ENCODE measurements at regions of chr1 and their contacts with region 1.

Region 1: DNA sequence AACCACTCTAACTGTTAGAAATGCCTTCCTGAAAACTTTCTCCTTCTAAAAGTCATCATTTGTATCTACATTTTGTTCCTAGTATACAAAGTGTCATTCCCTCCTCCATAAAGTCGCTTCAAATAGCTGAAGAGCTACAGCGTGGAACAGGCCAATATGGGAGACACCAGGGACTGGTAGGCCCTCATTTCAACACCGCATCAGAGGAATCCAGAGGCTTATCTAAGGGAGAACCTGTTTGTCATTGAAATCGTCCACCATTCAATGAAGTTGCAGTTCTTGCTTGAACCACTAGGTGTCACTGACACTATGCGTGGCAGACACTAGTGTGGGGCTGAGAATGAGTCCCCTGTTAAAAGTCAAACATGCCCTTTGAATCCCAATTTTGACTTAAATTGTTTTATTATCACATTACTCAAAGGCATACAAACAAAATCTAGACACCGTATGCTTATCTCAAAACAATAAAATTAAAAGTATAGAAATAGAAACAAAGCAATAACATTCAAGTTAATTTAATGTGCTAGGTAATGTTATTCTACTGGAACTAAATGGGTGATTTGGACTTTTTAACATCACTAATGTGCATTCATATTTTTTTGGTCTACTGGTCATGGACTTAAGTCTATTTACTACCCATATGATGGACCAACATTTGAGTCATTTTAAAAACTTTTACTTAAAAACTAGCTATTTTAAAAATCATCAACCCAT is 182.3 kb downstream of the FCRL5 start:
- DNase-seq: peak; percentile 71
- H3K4me3 ChIP-seq: no peak overlapping the region
- H3K27ac ChIP-seq: no peak overlapping the region
- H3K4me1 ChIP-seq: no peaks in the 10 kb centered on the region
- H3K27me3 ChIP-seq: peaks cover 2 to 3% of the 10 kb centered on the region in 2 experiments
- CTCF ChIP-seq: peak; percentile 70 to 77
- POLR2A ChIP-seq: no peak

Region 2: DNA sequence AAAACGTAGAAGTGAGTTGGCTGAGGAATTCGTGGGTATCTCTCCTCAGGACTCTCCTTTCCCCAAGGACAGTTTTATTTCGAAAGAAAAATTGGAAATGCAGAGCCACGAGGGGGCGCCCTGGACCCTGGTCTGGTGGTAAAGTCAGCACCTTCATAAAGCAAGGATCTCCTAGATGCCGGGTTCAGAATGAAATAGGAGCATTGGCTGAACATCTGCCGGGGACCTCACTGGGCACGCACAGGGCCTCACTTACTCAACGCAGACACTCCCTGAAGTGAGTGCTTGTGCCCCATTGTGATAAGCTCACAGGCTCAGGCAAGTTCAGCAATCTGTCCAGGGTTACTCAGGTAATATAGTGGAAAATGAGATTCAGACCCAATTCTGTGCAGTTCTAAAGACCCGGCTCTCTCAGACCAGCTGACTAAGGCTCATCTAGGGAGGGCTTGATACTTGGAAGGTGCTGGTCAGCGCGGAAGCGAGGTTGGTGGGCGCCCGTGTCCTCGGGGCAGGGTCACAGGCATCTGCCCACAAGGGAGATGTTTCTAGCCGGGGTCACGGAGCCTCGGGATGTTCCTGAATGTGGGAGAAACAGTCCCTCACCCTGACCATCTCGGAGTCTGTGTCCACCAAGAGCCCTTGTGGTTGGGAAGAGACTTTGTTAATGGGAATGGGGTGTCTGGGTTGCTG is 176.1 kb before region 1 on chr1:
- CTCF ChIA-PET with region 1: no interaction called
- POLR2A ChIA-PET with region 1: no interaction called
- dilution Hi-C with region 1: no loop called
- intact Hi-C with region 1: loop called (anchors 2 kb)
- DNase-seq: peak; percentile 61
- H3K4me3 ChIP-seq: no peak overlapping the region
- H3K27ac ChIP-seq: no peak overlapping the region
- H3K4me1 ChIP-seq: no peaks in the 10 kb centered on the region
- H3K27me3 ChIP-seq: peaks cover 17% of the 10 kb centered on the region in 2 experiments
- CTCF ChIP-seq: peak; percentile 73 to 75
- POLR2A ChIP-seq: no peak

Region 3: DNA sequence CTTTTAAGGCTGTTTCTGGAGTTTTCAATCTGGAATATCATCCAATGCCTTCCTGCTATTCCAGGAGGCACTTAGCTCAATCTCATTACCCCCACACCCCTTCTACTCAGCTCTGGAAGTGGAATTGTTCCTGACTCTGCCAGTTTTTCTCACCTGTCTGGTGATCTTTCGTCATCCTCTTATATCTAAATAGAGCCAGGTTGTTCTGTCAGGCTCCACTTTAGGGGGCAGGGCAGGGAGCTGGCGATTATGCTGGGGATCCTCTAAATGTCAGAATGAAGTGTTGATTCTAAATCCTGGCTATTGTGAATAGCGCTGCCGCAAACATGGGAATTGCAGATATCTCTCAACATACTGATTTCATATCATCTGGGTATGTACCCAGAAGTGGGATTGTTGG is 168.2 kb before region 1 on chr1:
- CTCF ChIA-PET with region 1: no interaction called
- POLR2A ChIA-PET with region 1: no interaction called
- dilution Hi-C with region 1: loop called (anchors 25 kb)
- intact Hi-C with region 1: no loop called
- DNase-seq: no peak
- H3K4me3 ChIP-seq: no peak overlapping the region
- H3K27ac ChIP-seq: no peak overlapping the region
- H3K4me1 ChIP-seq: no peaks in the 10 kb centered on the region
- H3K27me3 ChIP-seq: peaks cover 0 to 2% of the 10 kb centered on the region in 2 experiments
- CTCF ChIP-seq: no peak
- POLR2A ChIP-seq: no peak

Region 4: GRCh38 chr1:157301477-157302198 is 68.3 kb before region 1 on chr1:
- CTCF ChIA-PET with region 1: no interaction called
- POLR2A ChIA-PET with region 1: no interaction called
- dilution Hi-C with region 1: no loop called
- intact Hi-C with region 1: no loop called
- DNase-seq: no peak
- H3K4me3 ChIP-seq: no peak overlapping the region
- H3K27ac ChIP-seq: no peak overlapping the region
- H3K4me1 ChIP-seq: no peaks in the 10 kb centered on the region
- H3K27me3 ChIP-seq: no peaks in the 10 kb centered on the region
- CTCF ChIP-seq: no peak
- POLR2A ChIP-seq: no peak

Region 5: DNA sequence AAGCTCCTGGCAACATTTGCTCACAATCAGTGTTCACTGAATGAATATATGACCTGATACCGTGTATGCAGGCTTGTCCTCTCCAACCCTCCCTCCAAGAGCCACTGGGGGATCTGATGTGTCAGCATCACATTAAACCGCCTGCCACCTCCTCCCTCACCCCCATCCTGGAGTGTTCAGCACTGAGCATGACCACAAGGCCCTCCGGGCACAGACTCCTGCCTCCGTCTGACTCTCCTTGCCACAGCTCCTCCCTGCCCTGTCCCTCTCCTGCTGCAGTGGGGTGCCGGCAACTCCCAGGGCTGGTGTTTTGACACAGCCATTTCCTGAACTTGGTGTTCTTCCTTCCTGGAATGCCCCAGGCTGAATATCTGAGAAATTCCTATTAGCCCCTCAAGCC is 45.7 kb after region 1 on chr1:
- CTCF ChIA-PET with region 1: no interaction called
- POLR2A ChIA-PET with region 1: no interaction called
- dilution Hi-C with region 1: no loop called
- intact Hi-C with region 1: no loop called
- DNase-seq: no peak
- H3K4me3 ChIP-seq: no peak overlapping the region
- H3K27ac ChIP-seq: no peak overlapping the region
- H3K4me1 ChIP-seq: peaks cover 11% of the 10 kb centered on the region
- H3K27me3 ChIP-seq: no peaks in the 10 kb centered on the region
- CTCF ChIP-seq: no peak
- POLR2A ChIP-seq: no peak

Region 6: DNA sequence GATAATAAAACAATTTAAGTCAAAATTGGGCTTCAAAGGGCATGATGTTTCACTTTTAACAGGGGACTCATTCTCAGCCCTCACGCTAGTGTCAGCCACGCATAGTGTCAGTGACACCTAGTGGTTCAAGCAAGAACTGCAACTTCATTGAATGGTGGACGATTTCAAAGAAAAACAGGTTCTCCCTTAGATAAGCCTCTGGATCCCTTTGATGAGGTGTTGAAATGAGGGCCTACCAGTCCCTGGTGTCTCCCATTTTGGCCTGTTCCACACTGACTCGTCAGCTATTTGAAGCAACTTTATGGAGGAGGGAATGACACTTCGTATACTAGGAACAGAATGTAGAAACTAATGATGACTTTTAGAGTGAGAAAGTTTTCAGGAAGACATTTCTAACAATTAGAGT is 126.2 kb after region 1 on chr1:
- CTCF ChIA-PET with region 1: interaction called, 57 read pairs
- POLR2A ChIA-PET with region 1: no interaction called
- dilution Hi-C with region 1: no loop called
- intact Hi-C with region 1: no loop called
- DNase-seq: peak; percentile 51
- H3K4me3 ChIP-seq: no peak overlapping the region
- H3K27ac ChIP-seq: no peak overlapping the region
- H3K4me1 ChIP-seq: no peaks in the 10 kb centered on the region
- H3K27me3 ChIP-seq: peaks cover 3 to 8% of the 10 kb centered on the region in 2 experiments
- CTCF ChIP-seq: peak; percentile 71 to 73
- POLR2A ChIP-seq: no peak

Region 7: GRCh38 chr1:157505481-157506272 is 135.7 kb after region 1 on chr1:
- CTCF ChIA-PET with region 1: interaction called, 39 read pairs
- POLR2A ChIA-PET with region 1: no interaction called
- dilution Hi-C with region 1: no loop called
- intact Hi-C with region 1: no loop called
- DNase-seq: peak; percentile 60
- H3K4me3 ChIP-seq: no peak overlapping the region
- H3K27ac ChIP-seq: no peak overlapping the region
- H3K4me1 ChIP-seq: no peaks in the 10 kb centered on the region
- H3K27me3 ChIP-seq: no peaks in the 10 kb centered on the region
- CTCF ChIP-seq: peak; percentile 70 to 81
- POLR2A ChIP-seq: no peak

Measured in endothelial cell of umbilical vein (primary cell).